ENCODE measurements at regions of chrX and their contacts with region 1.

Region 1: GRCh38 chrX:154397819-154398724 is at the start of gene RPL10:
- DNase-seq: peak; percentile 96
- ATAC-seq: peak; percentile 83
- H3K4me3 Mint-ChIP-seq: peak within 1 kb of the TSS; percentile 98
- H3K27ac Mint-ChIP-seq: peak within 1 kb of the TSS; percentile 99
- H3K4me1 Mint-ChIP-seq: peaks cover 20% of the 10 kb centered on the region
- H3K27me3 Mint-ChIP-seq: no peaks in the 10 kb centered on the region
- total RNA-seq, gene RPL10: 2,013 to 2,356 TPM

Region 2: DNA sequence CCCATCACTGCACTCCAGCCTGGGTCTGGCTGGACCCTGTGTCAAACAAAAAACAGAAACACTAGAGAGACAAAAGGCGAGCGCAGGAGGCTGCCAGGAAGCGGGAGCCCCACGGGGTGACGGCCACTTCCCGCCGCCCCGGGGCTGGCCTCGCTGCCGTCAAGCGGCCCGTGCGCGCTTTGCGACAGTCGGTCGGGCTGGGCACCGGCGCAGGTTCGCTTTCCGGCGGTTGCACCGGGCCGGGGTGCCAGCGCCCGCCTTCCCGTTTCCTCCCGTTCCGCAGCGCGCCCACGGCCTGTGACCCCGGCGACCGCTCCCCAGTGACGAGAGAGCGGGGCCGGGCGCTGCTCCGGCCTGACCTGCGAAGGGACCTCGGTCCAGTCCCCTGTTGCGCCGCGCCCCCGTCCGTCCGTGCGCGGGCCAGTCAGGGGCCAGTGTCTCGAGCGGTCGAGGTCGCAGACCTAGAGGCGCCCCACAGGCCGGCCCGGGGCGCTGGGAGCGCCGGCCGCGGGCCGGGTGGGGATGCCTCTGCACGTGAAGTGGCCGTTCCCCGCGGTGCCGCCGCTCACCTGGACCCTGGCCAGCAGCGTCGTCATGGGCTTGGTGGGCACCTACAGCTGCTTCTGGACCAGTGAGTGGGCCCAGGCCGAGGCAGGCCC is 13.4 kb after region 1 on chrX and contains the start of gene TAFAZZIN:
- CTCF ChIA-PET with region 1: interaction called, 15 read pairs
- DNase-seq: peak; percentile 86
- ATAC-seq: peak; percentile 73
- H3K4me3 Mint-ChIP-seq: peak within 1 kb of the TSS; percentile 88
- H3K27ac Mint-ChIP-seq: peak within 1 kb of the TSS; percentile 92
- H3K4me1 Mint-ChIP-seq: peaks cover 14% of the 10 kb centered on the region
- H3K27me3 Mint-ChIP-seq: no peaks in the 10 kb centered on the region
- total RNA-seq, gene TAFAZZIN: 77.1 to 90.2 TPM

Measured in activated CD8-positive, alpha-beta memory T cell treated with anti-CD3 and anti-CD28 coated beads, Interleukin-2, amount 10 ng/mL, durations not matched to agents 7 days and 5 days (primary cell).